ENCODE measurements at regions of chr19 and their contacts with region 1.

Region 1: GRCh38 chr19:4065430-4066175 is 1.1 kb downstream of the ZBTB7A start:
- DNase-seq: peak; percentile 99
- ATAC-seq: peak; percentile 84
- H3K4me3 Mint-ChIP-seq: peak overlapping the region; percentile 71
- H3K27ac Mint-ChIP-seq: no peak overlapping the region
- H3K4me1 Mint-ChIP-seq: peaks cover 40% of the 10 kb centered on the region
- H3K27me3 Mint-ChIP-seq: no peaks in the 10 kb centered on the region

Region 2: GRCh38 chr19:3572132-3572854 is 493.3 kb before region 1 on chr19:
- CTCF ChIA-PET with region 1: no interaction called
- POLR2A ChIA-PET with region 1: no interaction called
- intact Hi-C with region 1: loop called in 1 of 2 experiments (anchors 1 kb)
- DNase-seq: peak; percentile 100
- ATAC-seq: peak; percentile 96
- H3K4me3 Mint-ChIP-seq: peak overlapping the region; percentile 73
- H3K27ac Mint-ChIP-seq: no peak overlapping the region
- H3K4me1 Mint-ChIP-seq: peaks cover 11% of the 10 kb centered on the region
- H3K27me3 Mint-ChIP-seq: no peaks in the 10 kb centered on the region

Region 3: DNA sequence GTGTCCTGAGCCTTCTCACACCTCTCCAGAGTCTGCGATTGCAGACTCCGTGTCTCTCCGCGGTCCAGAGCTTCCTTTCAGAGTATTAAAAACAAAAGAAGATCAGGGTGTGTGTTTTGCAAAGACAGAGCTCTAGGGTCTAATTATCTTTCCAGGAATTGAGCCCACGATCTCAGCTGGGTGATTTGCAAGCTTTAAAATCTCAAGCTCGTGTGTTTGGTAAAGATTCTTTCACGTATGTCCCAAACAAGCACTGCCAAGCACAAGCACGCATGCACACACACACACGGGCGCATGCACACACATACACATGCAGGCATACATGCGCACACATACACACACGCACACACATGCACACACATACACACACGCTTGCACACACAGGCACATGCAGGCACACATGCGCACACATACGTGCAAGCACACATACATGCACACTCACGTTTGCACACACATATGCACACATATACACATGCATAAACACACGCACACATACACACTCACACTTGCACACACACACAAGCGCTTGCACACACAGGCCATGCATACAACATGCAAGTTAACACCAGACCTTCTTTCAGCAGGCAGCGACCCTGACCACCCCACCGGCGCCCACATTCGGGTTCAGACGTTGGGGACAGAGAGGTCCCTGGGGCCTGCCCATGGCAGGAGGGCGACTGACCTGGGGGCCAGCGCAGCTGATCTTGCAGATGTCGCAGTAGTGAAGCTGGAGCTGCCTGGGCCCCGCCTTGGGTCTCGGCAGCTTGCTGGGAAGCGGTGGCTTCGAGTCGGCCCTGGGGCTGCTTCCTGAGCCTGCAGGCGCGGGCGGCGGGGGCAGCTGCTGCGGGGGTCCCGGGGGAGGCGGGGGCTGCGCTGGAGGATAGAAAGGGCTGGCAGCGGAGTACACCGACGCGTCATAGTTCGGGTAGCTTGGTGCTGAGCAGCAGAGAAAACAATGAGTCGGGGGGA is 234.7 kb before region 1 on chr19:
- CTCF ChIA-PET with region 1: no interaction called
- POLR2A ChIA-PET with region 1: no interaction called
- intact Hi-C with region 1: no loop called
- DNase-seq: no peak
- ATAC-seq: no peak
- H3K4me3 Mint-ChIP-seq: no peak overlapping the region
- H3K27ac Mint-ChIP-seq: no peak overlapping the region
- H3K4me1 Mint-ChIP-seq: no peaks in the 10 kb centered on the region
- H3K27me3 Mint-ChIP-seq: no peaks in the 10 kb centered on the region

Region 4: DNA sequence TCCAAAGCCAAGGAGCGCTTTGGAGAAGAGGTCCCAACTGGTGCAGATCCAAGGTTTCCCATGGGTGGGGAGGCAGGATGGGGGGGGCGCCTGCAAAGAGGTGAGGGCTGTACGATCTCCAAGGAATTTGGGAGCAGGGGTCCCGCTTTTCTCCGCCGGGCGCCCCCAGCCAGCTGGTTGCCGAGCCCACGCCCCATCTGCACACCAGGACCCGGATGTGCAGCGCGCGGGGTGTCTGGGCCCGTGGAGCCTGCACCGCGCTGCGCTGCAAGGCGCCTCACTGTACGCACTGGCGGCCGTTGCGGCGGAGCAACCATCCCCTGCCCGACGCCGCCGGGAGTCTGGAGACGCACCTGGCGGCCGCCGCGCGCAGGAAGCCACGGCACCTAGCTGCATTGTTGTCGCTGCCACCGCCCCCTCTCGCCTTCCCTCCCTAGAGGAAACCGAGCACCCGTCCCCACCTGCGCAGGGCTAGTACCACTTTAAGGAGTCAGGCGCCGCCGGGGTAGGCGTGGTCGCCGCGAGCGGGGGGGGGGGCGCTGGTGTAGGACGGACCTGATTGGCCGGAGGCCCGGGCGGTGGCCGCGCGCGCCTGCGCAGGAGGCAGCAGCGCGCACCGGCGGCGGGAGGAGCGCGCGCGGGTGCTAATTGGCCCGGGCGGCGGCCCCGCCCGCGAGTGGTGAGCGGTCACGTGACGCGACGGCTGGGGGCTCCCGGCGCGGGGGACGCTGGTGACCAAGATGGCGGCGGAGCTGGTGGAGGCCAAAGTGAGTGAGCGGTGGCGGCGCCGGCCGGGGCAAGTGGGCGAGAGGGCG is 58.4 kb before region 1 on chr19 and contains the start of gene PIAS4:
- CTCF ChIA-PET with region 1: no interaction called
- POLR2A ChIA-PET with region 1: no interaction called
- intact Hi-C with region 1: loop called (anchors 1 to 5 kb)
- DNase-seq: peak; percentile 97
- ATAC-seq: peak; percentile 92
- H3K4me3 Mint-ChIP-seq: peak within 1 kb of the TSS; percentile 75
- H3K27ac Mint-ChIP-seq: peak within 1 kb of the TSS; percentile 71
- H3K4me1 Mint-ChIP-seq: peaks cover 27% of the 10 kb centered on the region
- H3K27me3 Mint-ChIP-seq: no peaks in the 10 kb centered on the region
- total RNA-seq, gene PIAS4: 23.0 to 37.3 TPM

Region 5: DNA sequence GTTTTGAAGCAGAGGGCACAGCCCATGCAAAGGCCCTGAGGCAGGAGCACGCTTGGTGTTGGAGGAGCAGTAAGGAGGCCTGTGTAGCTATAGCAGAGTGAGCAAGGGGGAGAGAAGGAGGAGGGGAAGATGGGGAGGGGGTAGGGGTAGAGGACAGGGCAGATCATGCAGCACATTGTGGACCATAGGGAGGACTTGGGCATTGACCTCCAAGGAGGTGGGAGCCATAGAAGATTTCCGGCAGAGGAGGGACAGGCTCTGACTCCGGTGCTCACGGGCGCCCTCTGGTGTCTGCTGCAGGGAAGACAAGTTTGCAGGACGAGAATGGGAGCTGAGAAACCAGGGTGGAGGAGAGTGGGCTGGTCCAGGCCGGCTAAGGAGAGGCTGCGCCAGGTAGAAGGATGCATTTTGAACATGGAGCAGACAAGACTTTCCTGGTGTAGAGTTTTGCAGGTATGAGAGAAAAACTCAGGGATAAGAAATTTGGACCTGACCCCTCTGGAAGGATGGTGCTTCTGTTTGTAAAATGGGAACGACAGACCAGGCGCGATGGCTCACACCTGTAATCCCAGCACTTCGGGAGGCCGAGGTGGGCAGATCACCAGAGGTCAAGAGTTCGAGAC is 74.1 kb after region 1 on chr19:
- CTCF ChIA-PET with region 1: interaction called, 4 read pairs
- POLR2A ChIA-PET with region 1: interaction called, 3 read pairs
- intact Hi-C with region 1: loop called in 1 of 2 experiments (anchors 5 kb)
- DNase-seq: peak; percentile 94
- ATAC-seq: peak; percentile 92
- H3K4me3 Mint-ChIP-seq: peak overlapping the region; percentile 23
- H3K27ac Mint-ChIP-seq: peak overlapping the region; percentile 34
- H3K4me1 Mint-ChIP-seq: peaks cover 10% of the 10 kb centered on the region
- H3K27me3 Mint-ChIP-seq: peaks cover 3% of the 10 kb centered on the region

Region 6: DNA sequence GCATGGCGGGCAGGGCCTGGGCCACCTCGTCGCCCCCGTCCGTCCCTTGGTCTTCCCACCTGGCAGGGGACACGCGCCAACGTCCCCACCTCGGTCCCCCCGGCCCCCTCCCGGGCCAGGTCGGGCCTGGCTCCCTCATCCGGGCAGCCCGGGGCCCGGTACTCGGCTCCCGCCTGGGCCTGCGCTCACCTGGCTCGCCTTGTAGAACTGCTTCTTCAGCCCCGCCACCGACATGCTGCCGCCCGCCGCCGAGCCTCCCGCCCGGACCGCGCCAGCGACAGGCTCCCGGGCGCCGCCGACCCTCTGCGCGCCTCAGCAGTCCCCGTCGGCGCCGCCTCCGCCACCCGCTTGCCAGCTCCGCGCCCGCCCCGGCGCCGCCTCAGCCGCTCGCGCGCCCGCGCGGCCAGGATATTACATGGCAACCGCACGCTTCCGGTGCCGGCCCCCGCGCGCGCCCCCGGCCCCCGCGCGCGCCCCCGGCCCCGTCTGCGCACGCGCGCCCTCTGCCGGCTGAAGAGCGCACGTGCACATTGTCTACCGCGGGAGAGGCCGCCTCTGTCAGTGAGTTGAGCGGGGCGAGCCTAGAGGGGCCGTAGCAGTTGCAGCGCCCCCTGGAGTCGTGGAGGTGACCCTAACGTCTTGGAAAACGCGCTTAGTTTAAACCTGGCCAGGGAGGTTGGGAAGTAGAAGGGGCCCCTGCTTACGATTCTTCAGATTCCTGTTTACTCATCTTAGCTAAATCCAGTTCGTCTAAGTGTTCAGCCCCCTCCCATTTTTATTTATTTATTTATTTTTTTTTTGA is 334.7 kb after region 1 on chr19 and contains the start of gene SH3GL1:
- CTCF ChIA-PET with region 1: no interaction called
- POLR2A ChIA-PET with region 1: no interaction called
- intact Hi-C with region 1: loop called in 1 of 2 experiments (anchors 2 kb)
- DNase-seq: peak; percentile 95
- ATAC-seq: peak; percentile 54
- H3K4me3 Mint-ChIP-seq: peak within 1 kb of the TSS; percentile 93
- H3K27ac Mint-ChIP-seq: peak within 1 kb of the TSS; percentile 95
- H3K4me1 Mint-ChIP-seq: peaks cover 62% of the 10 kb centered on the region
- H3K27me3 Mint-ChIP-seq: no peaks in the 10 kb centered on the region
- total RNA-seq, gene SH3GL1: 42.0 to 46.8 TPM

Region 7: DNA sequence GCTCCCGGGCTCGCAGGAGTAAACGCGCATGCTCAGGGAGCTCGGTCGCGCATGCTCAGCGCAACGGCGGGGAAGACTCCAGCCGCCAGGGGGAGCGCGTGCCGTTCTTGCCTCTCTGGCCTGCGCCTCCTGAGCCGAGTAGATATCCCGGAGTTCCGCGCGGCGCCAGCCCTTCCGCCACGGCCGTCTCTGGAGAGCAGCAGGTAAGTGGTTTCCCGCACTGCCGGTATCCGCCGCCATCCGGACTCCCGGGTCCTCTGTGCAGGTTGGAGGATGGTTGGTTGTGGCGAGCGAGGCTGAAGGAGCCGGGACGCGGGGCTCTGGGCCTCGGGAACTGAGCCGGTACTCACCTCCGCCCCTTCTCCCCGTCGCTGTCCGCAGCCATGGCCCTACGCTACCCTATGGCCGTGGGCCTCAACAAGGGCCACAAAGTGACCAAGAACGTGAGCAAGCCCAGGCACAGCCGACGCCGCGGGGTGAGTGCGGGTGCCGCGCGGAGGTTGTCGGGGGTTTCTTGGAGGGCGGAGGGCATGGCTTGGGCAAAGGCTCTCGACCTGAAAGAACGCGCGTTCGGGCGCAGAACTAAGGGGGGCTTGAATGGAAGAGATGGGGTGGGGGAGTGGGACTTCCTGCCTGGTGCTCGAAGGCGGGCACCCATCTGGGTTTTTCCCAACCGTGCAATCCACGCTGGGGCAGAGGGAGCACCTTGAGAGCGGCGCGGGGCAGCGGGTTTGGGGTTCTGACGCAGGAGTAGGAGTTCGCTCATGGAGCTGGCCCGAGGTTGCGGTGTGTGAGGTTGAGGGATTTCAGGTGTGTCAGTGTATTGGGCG is 1624.7 kb after region 1 on chr19 and contains the start of gene RPL36:
- CTCF ChIA-PET with region 1: no interaction called
- POLR2A ChIA-PET with region 1: no interaction called
- intact Hi-C with region 1: loop called in 1 of 2 experiments (anchors 5 kb)
- DNase-seq: peak; percentile 100
- ATAC-seq: peak; percentile 54
- H3K4me3 Mint-ChIP-seq: peak within 1 kb of the TSS; percentile 100
- H3K27ac Mint-ChIP-seq: peak within 1 kb of the TSS; percentile 96
- H3K4me1 Mint-ChIP-seq: peaks cover 21% of the 10 kb centered on the region
- H3K27me3 Mint-ChIP-seq: no peaks in the 10 kb centered on the region
- total RNA-seq, gene RPL36: 1,452 to 1,530 TPM